Tibial artery (tissue), 4 donors: ENCODE measurements at regions of chr10 and their contacts with region 1.

Region 1: GRCh38 chr10:92436611-92437010 is 137.3 kb downstream of the IDE start:
- DNase-seq: no peak
- H3K4me3 ChIP-seq: no peak overlapping the region
- H3K27ac ChIP-seq: no peak overlapping the region
- H3K4me1 ChIP-seq: no peaks in the 10 kb centered on the region
- H3K27me3 ChIP-seq: no peaks in the 10 kb centered on the region
- CTCF ChIP-seq: no peak

Region 2: GRCh38 chr10:92087750-92088395 is 348.7 kb before region 1 on chr10:
- intact Hi-C with region 1: loop called (anchors 2 kb)
- DNase-seq: peak; percentile 72 to 73
- H3K4me3 ChIP-seq: no peak overlapping the region
- H3K27ac ChIP-seq: no peak overlapping the region
- H3K4me1 ChIP-seq: peaks cover 0 to 12% (median 1%) of the 10 kb centered on the region in 4 donors
- H3K27me3 ChIP-seq: no peaks in the 10 kb centered on the region
- CTCF ChIP-seq: peak; percentile 78 to 87

Region 3: GRCh38 chr10:92142949-92143348 is 293.7 kb before region 1 on chr10:
- intact Hi-C with region 1: no loop called
- DNase-seq: no peak
- H3K4me3 ChIP-seq: no peak overlapping the region
- H3K27ac ChIP-seq: peak overlapping the region in 1 of 2 donors; percentile 33
- H3K4me1 ChIP-seq: peaks cover 0 to 65% (median 21%) of the 10 kb centered on the region in 4 donors
- H3K27me3 ChIP-seq: no peaks in the 10 kb centered on the region
- CTCF ChIP-seq: no peak

Region 4: DNA sequence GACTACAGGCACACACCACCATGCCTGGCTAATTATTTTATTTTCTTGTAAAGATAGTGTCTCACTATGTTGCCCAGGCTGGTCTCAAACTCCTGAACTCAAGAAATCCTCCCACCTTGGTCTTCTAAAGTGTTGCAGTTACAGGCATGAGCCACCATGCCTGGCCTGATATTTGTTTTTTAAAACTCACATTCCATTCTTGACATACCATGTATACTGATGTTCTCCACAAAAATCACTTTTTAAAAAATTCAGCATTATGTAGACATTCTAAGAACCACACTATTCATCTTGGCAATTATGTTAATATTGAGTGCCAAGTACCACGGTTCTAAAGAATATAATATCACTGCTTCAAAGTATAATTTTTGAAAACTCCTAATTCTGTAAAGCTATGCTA is 93.8 kb after region 1 on chr10:
- intact Hi-C with region 1: no loop called
- DNase-seq: no peak
- H3K4me3 ChIP-seq: no peak overlapping the region
- H3K27ac ChIP-seq: no peak overlapping the region
- H3K4me1 ChIP-seq: no peaks in the 10 kb centered on the region
- H3K27me3 ChIP-seq: no peaks in the 10 kb centered on the region
- CTCF ChIP-seq: no peak

Region 5: GRCh38 chr10:92657024-92657423 is 220.4 kb after region 1 on chr10:
- intact Hi-C with region 1: no loop called
- DNase-seq: no peak
- H3K4me3 ChIP-seq: no peak overlapping the region
- H3K27ac ChIP-seq: no peak overlapping the region
- H3K4me1 ChIP-seq: no peaks in the 10 kb centered on the region
- H3K27me3 ChIP-seq: no peaks in the 10 kb centered on the region
- CTCF ChIP-seq: no peak